Tibial artery (tissue), 4 donors: ENCODE measurements at regions of chr16 and their contacts with region 1.

Region 1: GRCh38 chr16:6345090-6345489 is 987.6 kb upstream of the RBFOX1 start:
- DNase-seq: no peak
- H3K4me3 ChIP-seq: no peak overlapping the region
- H3K27ac ChIP-seq: no peak overlapping the region
- H3K4me1 ChIP-seq: no peaks in the 10 kb centered on the region
- H3K27me3 ChIP-seq: no peaks in the 10 kb centered on the region
- CTCF ChIP-seq: no peak

Region 2: GRCh38 chr16:6250511-6250910 is 94.6 kb before region 1 on chr16:
- intact Hi-C with region 1: loop called (anchors 10 kb)
- DNase-seq: no peak
- H3K4me3 ChIP-seq: no peak overlapping the region
- H3K27ac ChIP-seq: no peak overlapping the region
- H3K4me1 ChIP-seq: no peaks in the 10 kb centered on the region
- H3K27me3 ChIP-seq: no peaks in the 10 kb centered on the region
- CTCF ChIP-seq: no peak

Region 3: GRCh38 chr16:6629110-6629509 is 284.0 kb after region 1 on chr16:
- intact Hi-C with region 1: no loop called
- DNase-seq: no peak
- H3K4me3 ChIP-seq: no peak overlapping the region
- H3K27ac ChIP-seq: no peak overlapping the region
- H3K4me1 ChIP-seq: no peaks in the 10 kb centered on the region
- H3K27me3 ChIP-seq: no peaks in the 10 kb centered on the region
- CTCF ChIP-seq: no peak

Region 4: DNA sequence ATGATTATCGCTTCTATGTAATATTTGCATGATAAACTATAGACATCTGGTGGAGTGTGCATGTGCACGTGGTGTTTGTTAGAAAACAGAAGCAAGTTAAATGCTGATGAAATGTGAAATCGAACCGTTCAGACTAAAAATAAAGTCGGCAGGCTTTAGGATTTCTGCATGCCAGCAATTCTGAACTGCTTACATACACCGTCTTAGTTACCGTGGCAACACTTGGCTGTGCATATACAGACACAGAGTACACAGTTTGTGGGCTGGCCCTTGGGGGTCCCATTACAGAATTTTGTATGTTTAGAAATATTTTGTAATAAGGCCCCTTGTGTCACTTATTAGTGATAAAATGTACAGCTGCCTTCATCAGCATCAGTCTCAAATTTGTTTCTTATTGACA is 1593.1 kb after region 1 on chr16:
- intact Hi-C with region 1: loop called (anchors 5 kb)
- DNase-seq: no peak
- H3K4me3 ChIP-seq: no peak overlapping the region
- H3K27ac ChIP-seq: no peak overlapping the region
- H3K4me1 ChIP-seq: no peaks in the 10 kb centered on the region
- H3K27me3 ChIP-seq: no peaks in the 10 kb centered on the region
- CTCF ChIP-seq: no peak